ENCODE measurements at regions of chr11 and their contacts with region 1.

Region 1: DNA sequence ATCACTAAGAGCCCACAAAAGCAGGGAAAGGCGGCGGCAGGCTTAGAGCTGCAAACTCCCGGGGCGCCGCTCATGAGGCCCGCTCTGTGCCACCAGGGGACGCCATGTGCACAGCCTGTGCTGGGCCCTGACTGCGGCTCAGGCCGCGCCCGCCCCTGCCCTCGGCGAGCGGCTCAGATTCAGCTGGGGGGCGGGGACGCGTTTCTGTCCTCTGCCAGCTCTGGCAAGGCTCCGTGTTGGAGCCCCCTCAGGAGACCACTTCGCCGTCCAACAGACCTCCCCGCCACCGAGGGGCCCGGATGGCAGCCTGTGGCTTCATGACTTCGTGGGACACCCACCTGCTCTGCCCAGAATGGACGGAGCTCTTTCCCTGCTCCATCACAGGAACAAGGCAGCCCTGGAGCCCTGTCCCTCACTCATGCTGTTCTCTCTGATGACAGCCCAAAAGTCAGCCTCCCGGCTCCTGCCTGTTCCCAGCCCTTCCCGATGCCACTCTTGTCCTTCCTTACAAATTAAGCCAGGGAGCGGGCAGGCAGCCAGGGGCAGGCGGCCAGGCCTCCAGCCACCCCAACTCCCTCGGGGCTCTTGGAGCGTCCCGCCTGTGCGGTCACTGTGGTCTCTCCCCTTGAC is 69.1 kb downstream of the NAT10 start:
- DNase-seq: peak; percentile 88
- ATAC-seq: peak; percentile 99
- H3K4me3 Mint-ChIP-seq: peak overlapping the region; percentile 52
- H3K27ac Mint-ChIP-seq: no peak overlapping the region
- H3K4me1 Mint-ChIP-seq: peaks cover 24% of the 10 kb centered on the region
- H3K27me3 Mint-ChIP-seq: peaks cover 5% of the 10 kb centered on the region

Region 2: DNA sequence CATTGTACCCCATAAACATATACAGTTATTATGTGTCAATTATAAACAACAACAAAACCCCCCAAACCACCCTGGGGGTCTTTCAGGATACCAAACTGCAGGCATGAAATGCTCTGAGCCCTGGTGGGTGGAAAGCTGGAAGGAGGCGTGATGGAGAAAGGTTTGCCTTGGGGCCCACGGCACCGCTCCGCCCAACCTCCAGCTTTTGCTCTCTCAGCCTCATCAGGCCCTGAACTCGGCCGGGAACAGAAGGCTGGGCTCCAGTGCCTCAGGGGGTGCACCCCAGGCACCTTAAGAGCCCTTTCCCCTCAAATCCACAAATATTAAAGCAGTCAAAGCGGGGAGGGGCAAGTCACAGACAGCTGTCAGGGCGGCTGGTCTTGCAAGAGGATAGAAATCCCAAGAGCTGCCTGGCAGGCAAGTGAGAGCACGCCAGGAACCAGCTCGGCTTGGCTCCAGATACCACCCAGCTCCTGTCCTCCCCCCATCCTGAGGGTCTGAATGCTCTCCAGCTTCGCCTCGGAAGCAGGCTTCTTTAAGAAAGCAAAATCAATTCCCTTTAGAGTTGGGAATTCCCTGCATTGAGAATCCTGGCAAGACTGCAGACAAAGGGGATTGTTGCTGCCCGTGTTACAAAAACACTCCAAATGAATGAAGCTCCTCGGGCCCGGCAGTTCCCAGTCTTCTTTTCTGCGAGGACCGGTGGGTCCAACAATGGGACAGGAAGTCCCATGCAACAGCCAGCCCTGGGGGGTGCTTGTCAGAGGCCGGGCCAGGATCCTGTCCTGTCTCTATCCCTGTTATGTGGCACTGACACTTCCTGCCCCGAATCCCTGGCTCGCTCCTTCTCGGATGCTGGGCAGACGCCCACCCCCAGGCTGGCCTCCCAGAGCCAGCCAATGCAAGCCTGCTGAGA is 11.7 kb after region 1 on chr11:
- CTCF ChIA-PET with region 1: interaction called, 35 read pairs
- POLR2A ChIA-PET with region 1: no interaction called
- DNase-seq: no peak
- ATAC-seq: no peak
- H3K4me3 Mint-ChIP-seq: no peak overlapping the region
- H3K27ac Mint-ChIP-seq: no peak overlapping the region
- H3K4me1 Mint-ChIP-seq: peaks cover 8% of the 10 kb centered on the region
- H3K27me3 Mint-ChIP-seq: peaks cover 4% of the 10 kb centered on the region

Region 3: DNA sequence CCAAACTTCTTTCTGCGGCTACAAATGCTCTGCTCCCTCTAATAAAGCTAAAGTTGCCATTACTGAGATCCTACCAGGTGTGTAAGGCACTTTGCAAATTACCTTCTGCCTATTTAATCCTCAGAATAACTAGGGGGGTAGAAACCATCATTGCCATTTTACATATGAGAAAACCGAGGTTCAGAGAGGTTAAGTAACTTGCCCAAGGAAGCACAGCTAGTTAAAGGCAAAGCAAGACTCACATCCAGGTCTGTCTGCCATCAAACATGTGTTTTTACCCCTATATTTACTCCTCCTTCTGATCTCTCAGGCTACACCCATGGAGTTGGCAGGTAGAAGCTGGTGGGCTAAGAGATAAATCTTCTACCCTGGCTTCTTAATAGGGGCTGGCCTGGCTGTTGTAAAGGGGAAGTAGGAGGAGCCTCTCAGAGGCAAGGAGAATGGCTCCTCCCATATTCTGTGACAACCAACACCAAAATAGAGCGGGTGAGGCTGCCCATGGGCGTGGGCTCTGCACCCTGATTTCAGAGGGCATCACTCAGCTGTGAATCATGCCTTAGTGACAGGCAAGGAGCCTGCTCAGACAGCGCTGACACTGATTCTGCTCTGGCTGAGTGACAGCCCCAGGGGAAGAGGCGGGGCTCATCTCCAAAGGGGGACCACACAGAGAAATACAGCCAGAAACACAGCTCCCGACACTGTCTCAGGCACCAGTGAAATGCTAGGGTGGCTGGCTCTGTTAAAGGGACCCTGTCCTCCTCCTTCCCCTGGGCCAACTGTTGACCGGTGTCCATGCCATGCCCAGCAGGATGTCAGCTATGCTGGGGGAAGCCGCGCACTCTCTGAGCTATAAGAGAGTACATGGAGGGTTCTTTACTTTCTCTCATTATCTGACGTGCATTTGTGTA is 76.5 kb after region 1 on chr11:
- CTCF ChIA-PET with region 1: interaction called, 38 read pairs
- POLR2A ChIA-PET with region 1: interaction called, 3 read pairs
- DNase-seq: peak; percentile 81
- ATAC-seq: peak; percentile 91
- H3K4me3 Mint-ChIP-seq: peak overlapping the region; percentile 25
- H3K27ac Mint-ChIP-seq: peak overlapping the region; percentile 78
- H3K4me1 Mint-ChIP-seq: peaks cover 59% of the 10 kb centered on the region
- H3K27me3 Mint-ChIP-seq: no peaks in the 10 kb centered on the region

Region 4: DNA sequence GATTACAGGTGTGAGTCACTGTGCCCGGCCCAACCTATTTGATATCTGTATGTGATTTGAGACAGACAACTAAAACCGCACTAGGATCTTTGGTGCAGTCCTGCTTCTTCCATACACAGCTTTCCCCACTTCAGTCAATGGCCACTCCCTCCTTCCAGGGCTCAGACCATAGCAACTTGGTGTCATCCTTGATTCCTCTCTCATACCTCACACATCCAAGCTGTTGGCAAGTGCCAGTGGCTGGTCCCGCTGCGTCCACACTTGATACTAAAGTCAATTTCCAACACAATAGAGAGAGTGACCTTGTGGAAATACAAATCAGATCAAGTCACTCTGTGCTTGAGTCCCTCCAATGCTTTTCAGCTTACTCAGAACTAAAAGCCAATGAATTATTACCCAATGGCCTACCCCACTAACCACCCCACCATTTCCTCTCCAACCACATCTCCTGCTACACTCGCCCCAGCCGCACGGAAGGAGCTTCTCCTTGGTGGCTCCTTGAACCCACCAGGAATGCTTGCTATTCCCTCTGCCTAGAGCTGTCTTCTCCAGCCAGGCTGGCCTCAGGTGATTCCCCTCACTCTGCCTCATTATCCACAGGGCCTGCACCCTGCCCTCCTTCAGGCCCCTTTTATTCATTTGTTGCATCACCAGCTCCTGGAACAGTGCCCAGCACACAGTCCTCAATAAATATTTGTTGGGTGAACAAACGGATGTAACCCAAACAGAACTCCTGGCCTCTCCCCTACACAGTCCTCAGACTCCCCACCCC is 170.4 kb after region 1 on chr11:
- CTCF ChIA-PET with region 1: interaction called, 17 read pairs
- POLR2A ChIA-PET with region 1: no interaction called
- DNase-seq: no peak
- ATAC-seq: no peak
- H3K4me3 Mint-ChIP-seq: no peak overlapping the region
- H3K27ac Mint-ChIP-seq: no peak overlapping the region
- H3K4me1 Mint-ChIP-seq: peaks cover 21% of the 10 kb centered on the region
- H3K27me3 Mint-ChIP-seq: peaks cover 8% of the 10 kb centered on the region

Region 5: GRCh38 chr11:34366522-34366921 is 192.0 kb after region 1 on chr11:
- CTCF ChIA-PET with region 1: interaction called, 36 read pairs
- POLR2A ChIA-PET with region 1: no interaction called
- DNase-seq: no peak
- ATAC-seq: no peak
- H3K4me3 Mint-ChIP-seq: no peak overlapping the region
- H3K27ac Mint-ChIP-seq: no peak overlapping the region
- H3K4me1 Mint-ChIP-seq: peaks cover 11% of the 10 kb centered on the region
- H3K27me3 Mint-ChIP-seq: peaks cover 28% of the 10 kb centered on the region